Posterior cingulate gyrus (tissue), 11 donors: ENCODE measurements at regions of chr15 and their contacts with region 1.

Region 1: GRCh38 chr15:40440743-40441564 is at the start of gene BAHD1:
- DNase-seq: peak; percentile 97 to 100 (median 98)

Region 2: GRCh38 chr15:40470423-40471104 is 29.6 kb after region 1 on chr15 and contains the start of gene CHST14:
- intact Hi-C with region 1: loop called (anchors 2 kb)
- DNase-seq: peak in 8 of 10 donors; percentile 17 to 88 (median 43)

Region 3: GRCh38 chr15:40506964-40507571 is 66.1 kb after region 1 on chr15:
- intact Hi-C with region 1: loop called (anchors 10 kb)
- DNase-seq: peak; percentile 44 to 95 (median 72)